ENCODE measurements at regions of chr1 and their contacts with region 1.

Region 1: GRCh38 chr1:224513787-224514209 is 79.2 kb upstream of the WDR26 start:
- DNase-seq: peak; percentile 78 to 93 (median 92)
- ATAC-seq: peak; percentile 89
- H3K4me3 ChIP-seq: no peak overlapping the region
- H3K4me1 ChIP-seq: peaks cover 14% of the 10 kb centered on the region
- CTCF ChIP-seq: peak; percentile 72

Region 2: GRCh38 chr1:224623743-224624333 is 110.0 kb after region 1 on chr1:
- intact Hi-C with region 1: no loop called
- DNase-seq: peak in 2 of 3 donors; percentile 39 to 55
- ATAC-seq: peak; percentile 80
- H3K4me3 ChIP-seq: no peak overlapping the region
- H3K4me1 ChIP-seq: no peaks in the 10 kb centered on the region
- CTCF ChIP-seq: no peak

Region 3: DNA sequence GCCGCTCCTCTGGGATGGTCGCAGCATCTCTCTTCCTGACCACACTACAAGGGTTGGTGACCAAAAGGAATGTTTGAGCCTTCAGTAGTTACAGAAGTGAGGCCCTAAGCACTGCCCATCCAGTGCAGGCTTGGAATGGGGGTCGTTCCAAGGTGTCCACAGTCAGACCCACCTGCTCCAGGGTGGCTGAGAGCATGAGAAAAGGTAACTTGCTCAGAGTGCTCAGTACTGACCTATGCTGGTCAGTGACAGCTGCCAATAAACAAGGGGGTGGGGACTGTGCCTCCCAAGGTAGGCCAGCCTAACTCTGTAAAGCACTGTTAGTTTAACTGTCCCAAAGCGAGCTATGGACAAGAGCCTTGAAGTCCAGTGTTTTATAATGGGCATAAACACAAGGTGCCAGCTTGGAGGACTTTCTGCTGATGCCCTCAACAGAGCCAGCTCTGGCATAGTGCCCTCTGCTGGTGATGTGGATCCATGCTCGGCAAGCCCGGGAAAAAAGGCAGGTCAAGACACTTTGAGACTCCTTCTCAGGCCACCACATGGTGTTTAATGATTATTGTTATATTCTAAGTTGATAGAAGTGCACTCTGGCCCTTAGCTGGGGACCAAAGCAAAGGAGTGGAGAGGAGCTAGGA is 337.5 kb after region 1 on chr1:
- intact Hi-C with region 1: loop called in 1 of 2 experiments (anchors 10 kb)
- DNase-seq: peak; percentile 55 to 85 (median 79)
- ATAC-seq: peak; percentile 84
- H3K4me3 ChIP-seq: no peak overlapping the region
- H3K4me1 ChIP-seq: no peaks in the 10 kb centered on the region
- CTCF ChIP-seq: peak; percentile 63

Region 4: GRCh38 chr1:225137981-225138380 is 624.2 kb after region 1 on chr1:
- intact Hi-C with region 1: no loop called
- DNase-seq: no peak
- ATAC-seq: no peak
- H3K4me3 ChIP-seq: no peak overlapping the region
- H3K4me1 ChIP-seq: no peaks in the 10 kb centered on the region
- CTCF ChIP-seq: no peak